ENCODE measurements at regions of chr2 and their contacts with region 1.

Region 1: DNA sequence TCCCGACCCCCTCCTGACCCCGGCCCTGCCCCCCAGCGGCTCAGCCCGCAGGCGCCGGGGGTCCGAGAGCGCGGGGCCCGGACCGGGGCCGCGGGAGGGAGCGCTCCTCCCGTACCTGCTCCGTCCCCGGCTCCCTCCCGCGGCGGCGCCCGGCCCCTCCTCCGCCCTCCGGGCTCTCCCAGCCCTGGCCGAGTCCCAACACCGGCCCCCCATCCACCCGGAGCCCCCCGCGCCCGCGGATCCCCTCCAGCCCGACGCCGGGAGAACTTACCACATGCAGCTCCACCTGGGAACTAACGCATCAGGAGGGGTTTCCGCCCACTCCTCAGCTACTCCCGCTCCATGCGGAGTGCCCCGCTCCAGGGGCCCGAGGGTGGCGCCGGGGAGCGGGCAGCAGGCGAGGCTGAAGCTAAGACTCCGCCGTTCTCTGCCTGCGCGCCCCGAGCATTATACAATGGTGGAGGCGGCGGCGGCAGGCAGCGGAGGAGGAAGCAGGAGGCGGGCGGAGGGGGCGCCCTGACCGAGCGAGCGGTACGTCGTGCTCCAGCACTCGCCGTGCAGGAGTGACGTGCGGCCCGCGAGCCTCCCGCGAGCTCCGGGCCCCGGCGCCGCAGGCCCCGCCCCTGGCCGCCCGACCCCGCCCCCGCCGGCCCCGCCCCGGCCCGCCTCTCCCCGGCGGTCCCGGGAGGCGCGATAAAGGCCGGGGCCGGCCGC is at the start of gene SERTAD2:
- DNase-seq: peak; percentile 74 to 84
- ATAC-seq: peak; percentile 64 to 70
- H3K4me3 ChIP-seq: peak within 1 kb of the TSS; percentile 87 to 95 (median 90)
- H3K27ac ChIP-seq: peak within 1 kb of the TSS; percentile 96 to 100 (median 99)
- H3K4me1 ChIP-seq: peaks cover 41% of the 10 kb centered on the region in 2 donors
- H3K27me3 ChIP-seq: no peaks in the 10 kb centered on the region
- CTCF ChIP-seq: peak in 2 of 5 experiments; percentile 17 to 35
- POLR2A ChIP-seq: peak; percentile 92 to 95
- total RNA-seq, gene SERTAD2: 7.3 to 10.6 (median 8.7) TPM

Region 2: GRCh38 chr2:64338910-64339500 is 314.5 kb before region 1 on chr2:
- in situ Hi-C with region 1: no loop called
- intact Hi-C with region 1: no loop called
- DNase-seq: no peak
- ATAC-seq: no peak
- H3K4me3 ChIP-seq: no peak overlapping the region
- H3K27ac ChIP-seq: no peak overlapping the region
- H3K4me1 ChIP-seq: no peaks in the 10 kb centered on the region
- H3K27me3 ChIP-seq: no peaks in the 10 kb centered on the region
- CTCF ChIP-seq: no peak
- POLR2A ChIP-seq: no peak

Region 3: DNA sequence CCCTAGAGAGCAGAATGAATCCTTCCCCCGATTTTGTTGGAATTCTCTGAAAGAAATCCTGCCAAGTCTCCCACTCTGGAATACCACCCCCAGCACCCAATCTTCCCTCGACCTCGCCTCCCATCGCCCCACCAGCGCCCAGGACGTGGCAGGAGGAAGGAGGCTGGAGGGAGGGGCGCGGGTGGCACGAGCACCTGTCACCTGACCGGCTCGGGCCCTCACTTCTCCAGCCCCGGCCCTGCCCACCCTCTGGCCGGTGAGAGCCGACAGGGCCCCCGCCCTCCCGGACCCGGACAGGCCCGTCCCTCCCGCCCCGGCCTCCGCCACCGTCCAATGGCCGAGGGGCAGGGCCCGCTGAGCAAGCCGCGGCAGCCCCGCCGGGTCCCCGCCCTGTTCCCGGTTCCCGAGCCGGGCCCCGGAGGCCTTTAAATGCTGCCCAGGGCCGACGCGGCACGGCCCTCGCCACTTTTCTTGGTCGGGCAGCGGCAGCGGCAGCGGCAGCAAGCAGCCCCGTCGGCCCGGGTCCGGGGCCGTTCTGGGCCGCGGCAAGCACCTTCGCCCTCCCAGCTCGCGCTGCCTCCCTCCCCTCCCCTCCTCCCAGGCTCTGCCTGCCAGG is 199.6 kb before region 1 on chr2 and contains the start of gene LGALSL:
- in situ Hi-C with region 1: no loop called
- intact Hi-C with region 1: loop called (anchors 5 kb)
- DNase-seq: peak; percentile 60 to 76
- ATAC-seq: peak; percentile 70 to 72
- H3K4me3 ChIP-seq: peak within 1 kb of the TSS; percentile 72 to 93 (median 82)
- H3K27ac ChIP-seq: peak within 1 kb of the TSS; percentile 94 to 99 (median 96)
- H3K4me1 ChIP-seq: peaks cover 29 to 50% of the 10 kb centered on the region in 2 donors
- H3K27me3 ChIP-seq: no peaks in the 10 kb centered on the region
- CTCF ChIP-seq: no peak
- POLR2A ChIP-seq: peak; percentile 64 to 65
- total RNA-seq, gene LGALSL: 3.8 to 19.6 (median 6.5) TPM

Region 4: GRCh38 chr2:64767670-64768468 is 114.4 kb after region 1 on chr2:
- in situ Hi-C with region 1: loop called in 1 of 4 experiments (anchors 10 kb)
- intact Hi-C with region 1: no loop called
- DNase-seq: peak; percentile 88 to 89
- ATAC-seq: peak; percentile 98
- H3K4me3 ChIP-seq: peak overlapping the region; percentile 77 to 91 (median 84)
- H3K27ac ChIP-seq: peak overlapping the region; percentile 93 to 99 (median 97)
- H3K4me1 ChIP-seq: peaks cover 4 to 13% of the 10 kb centered on the region in 2 donors
- H3K27me3 ChIP-seq: no peaks in the 10 kb centered on the region
- CTCF ChIP-seq: peak in 1 of 5 experiments; percentile 10
- POLR2A ChIP-seq: peak; percentile 89 to 90

Region 5: GRCh38 chr2:64988420-64989125 is 335.1 kb after region 1 on chr2:
- in situ Hi-C with region 1: no loop called
- intact Hi-C with region 1: loop called (anchors 10 kb)
- DNase-seq: peak; percentile 70 to 82
- ATAC-seq: peak; percentile 60 to 77
- H3K4me3 ChIP-seq: peak overlapping the region; percentile 73 to 99 (median 92)
- H3K27ac ChIP-seq: peak overlapping the region; percentile 89 to 97 (median 96)
- H3K4me1 ChIP-seq: peaks cover 49 to 52% of the 10 kb centered on the region in 2 donors
- H3K27me3 ChIP-seq: no peaks in the 10 kb centered on the region
- CTCF ChIP-seq: peak; percentile 40 to 62 (median 55)
- POLR2A ChIP-seq: peak; percentile 62 to 69

Region 6: DNA sequence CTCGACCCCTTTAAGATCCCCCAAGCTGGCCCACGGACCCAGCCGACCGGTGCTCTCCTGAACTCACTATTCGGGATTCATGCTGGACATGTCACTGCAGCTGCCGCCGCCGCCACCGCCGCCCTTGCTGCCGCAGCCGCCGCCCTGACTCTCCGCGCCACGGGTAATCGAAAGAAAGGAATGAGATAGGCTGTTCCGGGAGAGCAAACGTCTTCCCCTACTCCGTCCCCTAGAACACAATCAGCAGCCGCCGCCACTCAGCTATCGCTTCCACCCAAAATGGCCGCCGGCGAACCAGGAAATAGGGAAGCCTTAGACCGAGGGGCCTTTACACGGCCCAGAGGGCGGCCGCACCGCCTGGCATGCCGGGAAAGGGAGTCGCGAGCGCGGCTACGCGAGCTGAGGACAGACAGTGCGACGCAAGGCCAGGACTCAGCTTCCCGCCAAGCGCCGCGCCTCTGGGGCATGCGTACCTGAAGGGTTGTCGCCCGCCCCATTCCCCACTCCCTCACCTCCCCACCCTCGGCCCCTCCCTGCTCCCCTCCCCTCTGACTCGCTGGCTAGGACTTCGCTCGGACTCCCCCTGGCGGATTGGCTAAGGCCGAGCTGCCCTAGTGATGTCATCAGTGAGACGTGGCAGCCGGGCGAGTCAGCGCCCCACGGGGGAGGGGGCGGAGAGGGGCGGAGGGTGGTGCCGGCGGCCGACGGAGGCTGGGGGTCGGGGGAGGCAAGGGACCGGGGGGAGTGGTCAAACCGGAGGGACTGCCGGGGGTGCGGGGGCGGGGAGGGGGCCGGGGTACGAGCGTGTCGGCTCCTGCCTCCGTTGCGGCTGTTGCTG is 476.5 kb after region 1 on chr2 and contains the start of gene RAB1A:
- in situ Hi-C with region 1: no loop called
- intact Hi-C with region 1: loop called (anchors 1 kb)
- DNase-seq: peak; percentile 100
- ATAC-seq: peak; percentile 83 to 86
- H3K4me3 ChIP-seq: peak within 1 kb of the TSS; percentile 80 to 100 (median 88)
- H3K27ac ChIP-seq: peak within 1 kb of the TSS; percentile 97 to 100 (median 98)
- H3K4me1 ChIP-seq: peaks cover 38 to 40% of the 10 kb centered on the region in 2 donors
- H3K27me3 ChIP-seq: no peaks in the 10 kb centered on the region
- CTCF ChIP-seq: peak in 3 of 5 experiments; percentile 49 to 68 (median 63)
- POLR2A ChIP-seq: peak; percentile 95 to 96
- total RNA-seq, gene RAB1A: 36.4 to 71.3 (median 43.7) TPM

Measured in gastrocnemius medialis (tissue), 4 donors.